ENCODE measurements at regions of chr7 and their contacts with region 1.

Region 1: DNA sequence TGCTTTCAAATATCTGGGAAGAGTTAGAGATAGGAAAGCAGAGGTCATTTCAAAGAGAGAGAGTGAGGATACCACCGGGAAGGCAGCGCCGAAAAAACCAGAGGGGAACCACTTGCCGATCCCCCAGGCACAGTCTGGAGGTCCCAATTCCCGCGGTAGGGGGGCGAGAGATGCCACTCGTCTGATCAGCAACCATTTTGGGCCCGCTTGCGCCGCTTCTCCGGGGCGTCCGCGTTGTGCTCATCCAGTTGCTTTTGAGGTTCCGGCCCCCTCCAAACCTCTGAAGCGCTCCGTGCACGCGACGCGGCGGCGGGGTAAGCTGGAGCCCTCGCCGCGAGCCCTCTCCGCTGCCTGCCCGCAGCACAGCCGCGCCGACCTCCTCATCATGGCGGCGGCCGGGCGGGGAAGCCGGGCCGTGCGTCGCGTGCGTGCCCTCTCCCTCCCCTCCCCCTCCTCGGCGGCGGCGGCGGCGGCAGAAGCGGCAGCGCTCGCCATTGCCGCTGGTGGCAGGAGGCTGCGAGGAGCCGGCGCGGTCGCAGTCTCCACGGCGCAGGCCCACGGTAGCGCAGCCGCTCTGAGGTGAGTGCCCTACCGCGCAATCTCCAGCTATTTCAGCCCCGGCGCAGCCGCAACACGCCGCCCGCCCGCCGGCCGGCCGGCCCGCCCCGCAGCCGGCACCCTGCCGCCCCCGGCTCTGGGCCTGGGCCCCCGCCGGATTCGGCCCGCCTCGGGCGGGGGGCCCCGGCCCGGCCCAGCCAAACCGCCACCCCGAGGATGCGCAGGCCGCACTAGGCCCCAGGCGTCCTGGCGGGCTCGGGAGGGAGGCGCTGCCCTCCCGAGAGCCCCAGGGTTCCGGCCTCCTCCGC is at the start of gene NRF1:
- DNase-seq: peak; percentile 86
- H3K4me3 Mint-ChIP-seq: peak within 1 kb of the TSS; percentile 91
- H3K27ac Mint-ChIP-seq: peak within 1 kb of the TSS; percentile 94
- H3K4me1 Mint-ChIP-seq: peaks cover 5% of the 10 kb centered on the region
- H3K27me3 Mint-ChIP-seq: no peaks in the 10 kb centered on the region
- CTCF ChIP-seq: no peak
- total RNA-seq, gene NRF1: 18.4 and 21.4 TPM in 2 replicates

Region 2: DNA sequence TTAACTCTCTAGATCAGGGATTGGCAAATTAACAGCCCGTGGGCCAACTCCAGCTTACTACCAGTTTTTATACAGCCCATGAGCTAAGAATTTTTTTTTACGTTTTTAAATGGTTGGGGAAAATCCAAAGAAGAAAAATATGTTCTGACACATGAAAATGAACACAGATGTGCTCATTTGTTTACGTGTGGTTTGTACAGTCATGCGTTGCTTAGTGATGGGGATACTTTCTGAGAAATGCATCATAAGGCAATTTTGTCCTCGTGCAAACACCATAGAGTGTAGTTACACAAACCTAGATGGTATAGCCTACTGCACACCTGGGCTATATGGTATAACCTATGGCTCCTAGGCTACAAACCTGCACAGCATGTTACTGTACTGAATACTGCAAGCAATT is 117.4 kb before region 1 on chr7:
- CTCF ChIA-PET with region 1: no interaction called
- POLR2A ChIA-PET with region 1: interaction called, 6 read pairs
- intact Hi-C with region 1: loop called (anchors 5 kb)
- DNase-seq: peak; percentile 61
- H3K4me3 Mint-ChIP-seq: no peak overlapping the region
- H3K27ac Mint-ChIP-seq: peak overlapping the region; percentile 89
- H3K4me1 Mint-ChIP-seq: no peaks in the 10 kb centered on the region
- H3K27me3 Mint-ChIP-seq: no peaks in the 10 kb centered on the region
- CTCF ChIP-seq: no peak

Region 3: GRCh38 chr7:129635300-129636029 is 24.0 kb after region 1 on chr7:
- CTCF ChIA-PET with region 1: interaction called, 17 read pairs
- POLR2A ChIA-PET with region 1: interaction called, 14 read pairs
- intact Hi-C with region 1: loop called (anchors 1 kb)
- DNase-seq: peak; percentile 80
- H3K4me3 Mint-ChIP-seq: no peak overlapping the region
- H3K27ac Mint-ChIP-seq: no peak overlapping the region
- H3K4me1 Mint-ChIP-seq: peaks cover 12% of the 10 kb centered on the region
- H3K27me3 Mint-ChIP-seq: no peaks in the 10 kb centered on the region
- CTCF ChIP-seq: peak; percentile 64

Region 4: GRCh38 chr7:129657363-129657762 is 45.9 kb after region 1 on chr7:
- CTCF ChIA-PET with region 1: interaction called, 3 read pairs
- POLR2A ChIA-PET with region 1: interaction called, 12 read pairs
- intact Hi-C with region 1: no loop called
- DNase-seq: peak; percentile 83
- H3K4me3 Mint-ChIP-seq: no peak overlapping the region
- H3K27ac Mint-ChIP-seq: peak overlapping the region; percentile 53
- H3K4me1 Mint-ChIP-seq: peaks cover 9% of the 10 kb centered on the region
- H3K27me3 Mint-ChIP-seq: no peaks in the 10 kb centered on the region
- CTCF ChIP-seq: no peak

Region 5: GRCh38 chr7:130695840-130696239 is 1084.4 kb after region 1 on chr7:
- CTCF ChIA-PET with region 1: no interaction called
- POLR2A ChIA-PET with region 1: no interaction called
- intact Hi-C with region 1: no loop called
- DNase-seq: peak; percentile 55
- H3K4me3 Mint-ChIP-seq: no peak overlapping the region
- H3K27ac Mint-ChIP-seq: no peak overlapping the region
- H3K4me1 Mint-ChIP-seq: no peaks in the 10 kb centered on the region
- H3K27me3 Mint-ChIP-seq: no peaks in the 10 kb centered on the region
- CTCF ChIP-seq: peak; percentile 66